Breast epithelium (tissue), 4 donors: ENCODE measurements at regions of chr13 and their contacts with region 1.

Region 1: DNA sequence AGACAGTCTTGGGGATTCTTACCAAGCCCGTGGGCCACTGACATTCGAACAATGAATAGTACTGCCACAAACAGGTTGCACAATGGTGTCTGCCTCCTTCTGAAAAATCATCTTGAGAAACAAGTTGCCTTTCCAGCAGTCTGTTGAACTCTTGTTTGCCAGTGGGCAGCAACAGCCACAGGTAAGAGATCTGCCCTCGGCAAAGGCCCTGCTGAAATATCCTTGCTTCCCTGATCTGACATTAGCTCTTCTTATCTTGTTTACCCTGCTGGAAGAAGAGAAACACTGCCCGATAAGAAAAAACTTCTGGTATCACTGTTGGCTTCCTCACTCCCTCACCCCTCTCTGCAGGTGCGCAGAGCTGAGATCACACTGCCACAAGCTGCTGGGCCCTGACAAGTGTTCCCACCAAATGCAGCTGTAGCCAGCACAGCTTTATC is 2.0 kb downstream of the DOCK9 start:
- DNase-seq: no peak
- H3K4me3 ChIP-seq: peak overlapping the region; percentile 47 to 67 (median 50)
- H3K27ac ChIP-seq: peak overlapping the region; percentile 44 to 67
- H3K4me1 ChIP-seq: peaks cover 3 to 15% of the 10 kb centered on the region in 2 donors
- H3K27me3 ChIP-seq: no peaks in the 10 kb centered on the region
- CTCF ChIP-seq: no peak
- POLR2A ChIP-seq: no peak

Region 2: GRCh38 chr13:98279473-98280175 is 696.2 kb before region 1 on chr13:
- intact Hi-C with region 1: no loop called
- DNase-seq: no peak
- H3K4me3 ChIP-seq: no peak overlapping the region
- H3K27ac ChIP-seq: no peak overlapping the region
- H3K4me1 ChIP-seq: peaks cover 0 to 6% of the 10 kb centered on the region in 2 donors
- H3K27me3 ChIP-seq: no peaks in the 10 kb centered on the region
- CTCF ChIP-seq: no peak
- POLR2A ChIP-seq: no peak

Region 3: GRCh38 chr13:98947925-98948324 is 27.9 kb before region 1 on chr13:
- intact Hi-C with region 1: loop called (anchors 2 kb)
- DNase-seq: no peak
- H3K4me3 ChIP-seq: no peak overlapping the region
- H3K27ac ChIP-seq: no peak overlapping the region
- H3K4me1 ChIP-seq: no peaks in the 10 kb centered on the region
- H3K27me3 ChIP-seq: no peaks in the 10 kb centered on the region
- CTCF ChIP-seq: no peak
- POLR2A ChIP-seq: no peak